CD8-positive, alpha-beta T cell (primary cell): ENCODE measurements at regions of chr5 and their contacts with region 1.

Region 1: DNA sequence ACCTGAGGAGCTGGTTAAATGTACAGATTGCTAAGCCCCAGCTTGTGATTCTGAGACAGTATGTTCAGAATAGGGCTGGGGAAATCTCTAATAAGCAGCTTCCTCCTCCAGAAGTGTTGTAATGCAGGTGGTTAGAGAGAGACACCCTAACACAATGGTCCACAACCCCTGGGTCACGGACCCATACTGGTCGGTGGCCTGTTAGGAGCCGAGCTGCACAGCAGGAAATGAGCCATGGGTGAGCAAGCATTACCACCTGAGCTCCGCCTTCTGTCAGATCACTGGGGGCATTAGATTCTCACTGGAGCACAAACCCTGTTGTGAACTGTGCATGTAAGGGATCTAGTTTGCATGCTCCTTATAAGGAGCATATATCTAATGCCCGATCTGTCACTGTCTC is 61.8 kb downstream of the SLC36A1 start:
- DNase-seq: no peak
- ATAC-seq: no peak
- H3K4me3 ChIP-seq: no peak overlapping the region
- H3K4me3 Mint-ChIP-seq: no peak overlapping the region
- H3K27ac ChIP-seq: no peak overlapping the region
- H3K27ac Mint-ChIP-seq: no peak overlapping the region
- H3K4me1 ChIP-seq: no peaks in the 10 kb centered on the region
- H3K4me1 Mint-ChIP-seq: no peaks in the 10 kb centered on the region
- H3K27me3 ChIP-seq: no peaks in the 10 kb centered on the region
- H3K27me3 Mint-ChIP-seq: no peaks in the 10 kb centered on the region
- CTCF ChIP-seq: no peak

Region 2: DNA sequence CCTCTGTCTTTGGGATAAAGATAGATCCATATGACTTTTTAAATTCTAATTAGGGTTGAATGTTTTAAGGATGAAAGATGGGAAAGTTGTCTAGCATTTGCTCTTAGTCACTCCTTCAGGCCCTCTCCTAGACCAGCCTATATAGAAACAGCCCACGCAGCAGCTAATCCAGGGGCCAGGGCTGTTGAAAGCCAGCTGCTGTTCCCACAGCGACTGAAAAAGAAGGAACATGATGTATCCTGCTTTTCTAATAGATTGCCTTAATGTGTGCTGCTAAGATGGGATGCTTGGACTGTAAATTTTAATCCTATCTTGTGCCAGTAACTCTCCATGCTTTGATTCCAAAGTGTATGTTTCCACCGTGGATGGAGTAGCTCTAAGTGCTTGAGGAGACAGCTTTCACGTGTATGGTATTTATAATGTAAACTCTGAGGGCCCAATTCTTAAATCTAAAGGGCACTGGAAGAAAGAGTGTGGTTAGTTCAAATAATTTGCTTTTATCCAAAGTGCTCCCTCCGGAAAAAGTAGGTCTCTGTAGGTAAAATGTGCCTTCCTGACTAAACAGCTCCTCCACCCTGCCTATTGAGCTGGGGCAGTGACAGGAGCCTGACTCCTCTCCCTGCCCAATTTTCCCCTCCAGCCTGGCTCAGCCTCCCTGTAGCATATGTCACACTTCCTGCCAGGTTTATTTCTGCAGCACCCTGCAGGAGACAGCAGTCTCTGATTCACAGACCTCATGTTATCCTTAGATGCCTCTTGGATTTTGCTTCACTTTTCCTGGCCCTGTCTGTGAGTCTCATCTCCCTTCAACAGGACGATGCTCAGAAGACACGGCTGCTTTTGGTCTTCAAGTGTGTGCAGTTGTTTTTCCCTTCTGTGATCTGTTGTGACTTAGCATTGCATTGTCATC is 28.6 kb before region 1 on chr5:
- CTCF ChIA-PET with region 1: no interaction called
- POLR2A ChIA-PET with region 1: no interaction called
- intact Hi-C with region 1: no loop called
- DNase-seq: no peak
- ATAC-seq: no peak
- H3K4me3 ChIP-seq: no peak overlapping the region
- H3K4me3 Mint-ChIP-seq: no peak overlapping the region
- H3K27ac ChIP-seq: no peak overlapping the region
- H3K27ac Mint-ChIP-seq: no peak overlapping the region
- H3K4me1 ChIP-seq: no peaks in the 10 kb centered on the region
- H3K4me1 Mint-ChIP-seq: no peaks in the 10 kb centered on the region
- H3K27me3 ChIP-seq: no peaks in the 10 kb centered on the region
- H3K27me3 Mint-ChIP-seq: no peaks in the 10 kb centered on the region
- CTCF ChIP-seq: no peak

Region 3: DNA sequence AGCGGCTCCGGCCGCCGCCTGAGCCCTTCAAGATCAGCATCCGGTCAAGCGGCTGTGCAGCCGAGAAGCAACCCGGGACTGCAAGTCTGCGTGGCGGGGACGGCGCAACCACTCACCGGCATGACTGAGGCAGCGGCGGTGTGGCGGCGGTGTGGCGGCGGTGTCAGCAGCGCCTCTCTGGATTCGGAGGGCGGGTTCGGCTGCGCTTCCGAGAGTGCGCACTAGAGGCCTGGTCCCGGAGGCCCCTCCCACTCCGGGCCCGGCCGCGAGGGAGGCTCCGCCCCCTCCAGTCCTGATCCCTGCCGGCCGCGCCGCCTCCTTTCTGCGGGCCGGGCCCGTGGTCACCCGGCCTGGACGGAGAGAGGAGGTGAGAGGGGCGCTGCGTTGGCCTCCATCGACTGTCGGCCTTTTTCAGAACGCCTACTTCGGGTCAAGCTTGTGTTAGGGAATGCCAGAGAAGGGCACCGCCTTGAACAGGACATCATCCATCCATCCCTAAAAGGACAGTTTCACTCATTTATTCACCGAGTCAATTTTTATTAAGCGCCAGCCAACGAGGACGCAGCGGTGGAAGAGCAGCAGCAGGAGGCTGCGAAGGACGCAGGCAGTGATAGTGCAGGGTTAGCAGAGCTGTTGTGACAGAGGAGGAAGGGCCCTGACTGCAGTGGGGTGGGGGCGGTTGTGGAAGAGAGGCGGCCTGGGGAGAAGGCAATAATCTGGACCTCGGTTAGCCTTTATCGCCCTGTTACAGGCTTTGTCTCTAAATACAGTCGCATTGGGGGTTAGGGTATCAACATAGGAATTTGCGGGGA is 249.4 kb after region 1 on chr5 and contains the start of gene ATOX1:
- CTCF ChIA-PET with region 1: no interaction called
- POLR2A ChIA-PET with region 1: no interaction called
- intact Hi-C with region 1: loop called in 1 of 2 experiments (anchors 10 kb)
- DNase-seq: peak; percentile 82 to 94 (median 90)
- ATAC-seq: peak; percentile 99
- H3K4me3 ChIP-seq: peak within 1 kb of the TSS; percentile 61 to 91
- H3K4me3 Mint-ChIP-seq: peak within 1 kb of the TSS; percentile 95
- H3K27ac ChIP-seq: peak within 1 kb of the TSS; percentile 60 to 70
- H3K27ac Mint-ChIP-seq: peak within 1 kb of the TSS; percentile 94
- H3K4me1 ChIP-seq: peaks cover 26% of the 10 kb centered on the region
- H3K4me1 Mint-ChIP-seq: peaks cover 35% of the 10 kb centered on the region
- H3K27me3 ChIP-seq: no peaks in the 10 kb centered on the region
- H3K27me3 Mint-ChIP-seq: no peaks in the 10 kb centered on the region
- CTCF ChIP-seq: no peak
- total RNA-seq, gene ATOX1: 12.6 to 13.2 TPM